A673 (cell line): ENCODE measurements at regions of chr11 and their contacts with region 1.

Region 1: DNA sequence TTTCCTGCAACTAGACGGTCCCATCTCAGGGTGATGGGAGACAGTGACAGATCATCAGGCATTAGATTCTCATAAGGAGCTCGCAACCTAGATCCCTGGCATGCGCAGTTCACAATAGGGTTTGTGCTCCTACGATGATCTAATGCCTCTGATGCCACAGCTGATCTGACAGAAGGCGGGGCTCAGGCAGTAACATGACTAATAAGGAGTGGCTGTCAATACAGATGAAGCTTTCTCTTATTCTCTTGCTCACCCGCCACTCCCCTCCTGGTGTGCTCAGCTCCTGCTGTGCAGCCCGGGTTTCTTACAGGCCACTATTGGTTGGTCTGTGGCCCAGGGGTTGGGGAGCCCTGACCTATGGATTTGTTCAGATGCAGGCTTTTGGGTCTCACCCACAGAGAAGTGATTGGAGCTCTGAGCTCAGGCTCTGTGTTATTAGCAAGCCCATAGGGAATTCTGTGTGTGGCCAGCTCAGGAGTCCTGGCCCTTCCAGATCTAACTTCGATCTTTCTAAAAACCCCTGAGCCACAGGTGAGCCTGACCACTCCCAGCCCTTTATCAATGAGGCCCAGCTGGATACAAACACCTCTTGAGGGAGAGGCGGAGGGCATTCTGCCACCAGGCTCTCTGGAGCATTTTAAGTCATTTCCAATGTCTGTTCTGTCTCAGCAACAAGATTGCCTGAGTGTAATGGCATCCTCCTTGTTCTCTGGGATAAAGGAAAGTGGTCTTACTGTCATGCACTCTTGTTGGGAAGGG is 351.8 kb downstream of the BUD13 start:
- DNase-seq: peak; percentile 35
- H3K4me3 ChIP-seq: no peak overlapping the region
- H3K27ac ChIP-seq: no peak overlapping the region
- H3K4me1 ChIP-seq: no peaks in the 10 kb centered on the region
- H3K27me3 ChIP-seq: no peaks in the 10 kb centered on the region
- CTCF ChIP-seq: no peak

Region 2: DNA sequence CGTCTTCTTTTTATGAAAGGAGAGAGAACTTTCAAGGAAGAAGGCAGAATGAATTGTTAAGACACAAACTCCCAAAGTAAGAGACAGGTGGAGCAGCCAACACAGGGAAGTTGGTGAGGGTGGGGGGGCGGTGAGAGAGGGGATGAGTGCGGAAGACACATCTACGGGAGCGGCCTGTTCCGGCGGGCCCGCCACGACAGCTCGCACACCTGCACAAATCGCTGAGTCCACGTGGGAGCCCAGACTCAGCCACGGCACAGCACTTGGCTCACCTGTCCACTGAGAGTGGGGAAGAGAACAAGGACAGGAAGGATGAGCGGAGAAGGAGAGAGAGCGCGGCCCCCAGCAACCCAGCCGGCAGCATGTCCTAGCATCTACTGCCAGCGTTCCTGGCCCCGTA is 1247.8 kb before region 1 on chr11:
- CTCF ChIA-PET with region 1: interaction called, 18 read pairs
- POLR2A ChIA-PET with region 1: no interaction called
- intact Hi-C with region 1: no loop called
- DNase-seq: no peak
- H3K4me3 ChIP-seq: no peak overlapping the region
- H3K27ac ChIP-seq: no peak overlapping the region
- H3K4me1 ChIP-seq: no peaks in the 10 kb centered on the region
- H3K27me3 ChIP-seq: no peaks in the 10 kb centered on the region
- CTCF ChIP-seq: no peak

Region 3: GRCh38 chr11:116797816-116798215 is 376.9 kb after region 1 on chr11:
- CTCF ChIA-PET with region 1: no interaction called
- POLR2A ChIA-PET with region 1: no interaction called
- intact Hi-C with region 1: no loop called
- DNase-seq: no peak
- H3K4me3 ChIP-seq: no peak overlapping the region
- H3K27ac ChIP-seq: no peak overlapping the region
- H3K4me1 ChIP-seq: no peaks in the 10 kb centered on the region
- H3K27me3 ChIP-seq: no peaks in the 10 kb centered on the region
- CTCF ChIP-seq: no peak